ENCODE measurements at regions of chr17 and their contacts with region 1.

Region 1: GRCh38 chr17:11719856-11720255 is 121.6 kb downstream of the DNAH9 start:
- DNase-seq: no peak
- ATAC-seq: peak; percentile 74
- H3K4me3 ChIP-seq: no peak overlapping the region
- H3K27ac ChIP-seq: no peak overlapping the region
- H3K4me1 ChIP-seq: no peaks in the 10 kb centered on the region
- H3K27me3 ChIP-seq: no peaks in the 10 kb centered on the region
- CTCF ChIP-seq: no peak

Region 2: DNA sequence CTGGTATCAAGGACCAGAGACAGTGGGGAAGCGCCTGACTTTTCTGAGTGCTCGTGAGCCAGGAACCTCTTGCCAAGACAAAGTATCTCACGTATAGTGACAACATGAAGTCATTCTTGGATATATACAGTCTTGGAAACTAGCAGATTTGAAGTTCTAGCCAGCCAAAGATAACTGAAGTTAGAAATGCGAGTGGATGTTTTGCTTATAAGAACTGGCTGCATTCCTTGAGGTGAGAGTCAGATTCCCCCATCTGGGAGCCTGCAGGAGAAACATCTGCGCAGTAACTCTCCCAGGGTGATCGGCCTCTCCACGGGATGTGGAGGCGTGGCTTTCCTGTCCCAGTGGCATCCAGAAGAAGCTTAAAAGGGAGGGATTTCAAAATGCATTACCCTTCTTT is 389.0 kb before region 1 on chr17:
- intact Hi-C with region 1: loop called (anchors 10 kb)
- DNase-seq: no peak
- ATAC-seq: no peak
- H3K4me3 ChIP-seq: no peak overlapping the region
- H3K27ac ChIP-seq: no peak overlapping the region
- H3K4me1 ChIP-seq: no peaks in the 10 kb centered on the region
- H3K27me3 ChIP-seq: no peaks in the 10 kb centered on the region
- CTCF ChIP-seq: no peak

Region 3: GRCh38 chr17:11701911-11702310 is 17.9 kb before region 1 on chr17:
- intact Hi-C with region 1: loop called (anchors 2 kb)
- DNase-seq: no peak
- ATAC-seq: no peak
- H3K4me3 ChIP-seq: no peak overlapping the region
- H3K27ac ChIP-seq: no peak overlapping the region
- H3K4me1 ChIP-seq: no peaks in the 10 kb centered on the region
- H3K27me3 ChIP-seq: no peaks in the 10 kb centered on the region
- CTCF ChIP-seq: no peak

Measured in upper lobe of right lung (tissue), 1 donor.